PC-9 (cell line): ENCODE measurements at regions of chr6 and their contacts with region 1.

Region 1: DNA sequence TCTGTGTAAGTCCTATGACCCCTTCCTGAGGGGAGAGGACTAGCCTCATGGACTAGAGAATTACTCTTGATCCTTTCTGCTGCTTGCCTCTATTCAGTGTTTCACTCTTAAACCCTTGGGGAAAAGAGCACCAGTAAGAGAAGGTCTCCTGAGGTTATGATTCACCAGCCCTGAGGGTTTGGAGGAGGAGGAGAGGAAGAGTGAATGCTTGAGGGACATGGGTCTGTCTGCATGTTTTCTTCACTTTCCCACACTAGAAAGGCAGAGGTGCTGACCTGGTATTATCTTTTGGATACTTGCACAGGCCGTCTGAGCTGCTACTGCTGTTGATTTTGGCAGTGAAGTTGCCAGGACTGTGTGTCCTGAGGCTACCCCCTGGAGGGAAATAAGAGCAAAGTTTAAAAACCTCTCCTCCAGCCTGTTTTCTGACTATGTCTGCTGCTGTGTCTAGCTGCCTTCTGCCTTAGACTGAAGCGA is 78.3 kb downstream of the CD109 start:
- DNase-seq: peak; percentile 80 to 97
- H3K4me3 ChIP-seq: peak overlapping the region; percentile 11; the same call in 1 of the 2 replicates
- H3K27ac ChIP-seq: peak overlapping the region; percentile 69
- H3K4me1 ChIP-seq: peaks cover 31% of the 10 kb centered on the region
- H3K27me3 ChIP-seq: no peaks in the 10 kb centered on the region
- CTCF ChIP-seq: no peak

Region 2: DNA sequence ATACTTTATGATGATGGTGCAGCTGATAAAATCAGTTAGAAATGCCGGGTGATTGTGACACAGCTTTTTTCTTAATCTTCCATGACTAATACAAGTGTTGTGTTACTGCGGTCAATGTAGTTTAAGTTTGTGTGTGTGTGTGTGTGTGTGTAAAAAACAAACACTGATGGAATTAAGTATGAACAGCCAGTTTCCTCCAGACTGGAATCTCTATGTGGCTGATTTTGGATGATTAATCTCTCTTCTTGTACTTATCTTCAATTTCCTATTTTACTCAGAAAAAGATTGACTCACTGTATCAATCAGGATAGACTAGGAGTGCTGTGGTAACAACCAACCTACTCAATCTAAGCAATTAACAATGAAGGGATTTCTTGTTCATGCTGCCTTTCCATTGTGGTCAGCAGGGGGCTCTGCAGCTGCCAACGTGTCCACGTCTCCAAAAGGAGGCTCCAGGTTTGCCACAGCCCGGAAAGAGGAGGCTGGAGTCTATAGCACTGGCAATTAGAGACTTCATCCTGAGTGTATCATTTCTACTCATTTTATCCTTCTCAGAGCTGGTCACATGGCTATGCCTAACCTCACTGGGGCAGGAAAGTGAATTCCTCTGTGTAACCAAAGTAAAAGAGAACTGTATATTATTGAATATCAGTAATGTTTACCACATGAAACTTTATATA is 29.4 kb after region 1 on chr6:
- CTCF ChIA-PET with region 1: no interaction called
- POLR2A ChIA-PET with region 1: no interaction called
- intact Hi-C with region 1: loop called (anchors 2 kb)
- DNase-seq: peak; percentile 37 to 91
- H3K4me3 ChIP-seq: no peak overlapping the region
- H3K27ac ChIP-seq: peak overlapping the region; percentile 93
- H3K4me1 ChIP-seq: peaks cover 25% of the 10 kb centered on the region
- H3K27me3 ChIP-seq: no peaks in the 10 kb centered on the region
- CTCF ChIP-seq: peak; percentile 63

Region 3: GRCh38 chr6:74057326-74057725 is 283.0 kb after region 1 on chr6:
- CTCF ChIA-PET with region 1: no interaction called
- POLR2A ChIA-PET with region 1: no interaction called
- intact Hi-C with region 1: no loop called
- DNase-seq: no peak
- H3K4me3 ChIP-seq: no peak overlapping the region
- H3K27ac ChIP-seq: no peak overlapping the region
- H3K4me1 ChIP-seq: no peaks in the 10 kb centered on the region
- H3K27me3 ChIP-seq: no peaks in the 10 kb centered on the region
- CTCF ChIP-seq: no peak